ENCODE measurements at regions of chr17 and their contacts with region 1.

Region 1: DNA sequence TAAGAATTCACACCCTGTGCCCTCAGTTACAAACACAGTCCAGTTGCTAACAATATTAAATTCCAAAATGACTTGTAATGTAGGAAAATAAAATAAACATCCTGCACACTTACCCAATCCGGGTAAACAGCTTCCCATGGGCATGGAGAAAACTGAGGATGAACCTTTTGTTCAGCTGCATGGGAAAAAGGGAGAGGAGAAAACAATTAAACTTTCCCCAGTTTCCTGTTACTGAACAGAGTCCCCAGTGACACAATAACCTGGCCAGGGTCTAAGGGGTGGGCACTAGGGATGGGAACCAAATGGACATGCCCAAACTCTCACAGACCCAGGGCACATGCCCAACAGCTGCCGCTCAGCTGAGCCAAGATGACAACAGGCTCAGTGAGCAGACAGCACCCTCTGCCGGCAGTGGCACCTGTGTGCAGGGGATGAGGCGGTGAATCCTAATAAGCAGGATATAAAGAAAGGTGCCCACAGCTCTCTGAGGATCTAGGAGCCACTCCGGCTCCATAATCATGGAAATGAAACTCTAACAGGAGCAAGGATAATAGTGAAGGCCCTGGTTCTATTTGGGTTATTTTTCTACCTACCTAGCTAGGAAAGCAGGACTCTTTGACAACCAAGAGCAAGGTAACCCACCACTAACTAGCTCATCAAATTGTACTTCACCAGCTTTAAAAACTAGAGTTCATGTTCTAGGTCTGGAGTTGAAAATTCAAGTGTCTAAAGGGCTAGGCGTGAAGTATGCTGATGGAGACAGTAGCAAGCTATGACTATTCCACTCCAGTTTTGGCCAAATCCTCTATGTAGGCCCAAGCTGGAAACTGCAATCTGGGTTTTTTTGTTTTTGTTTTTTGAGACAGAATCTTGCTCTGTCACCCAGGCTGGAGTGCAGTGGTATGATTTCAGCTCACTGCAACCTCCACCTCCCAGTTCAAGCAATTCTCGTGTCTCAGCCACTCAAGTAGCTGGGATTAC is 58.8 kb downstream of the SMG6 start:
- DNase-seq: peak; percentile 89
- ATAC-seq: peak; percentile 98
- H3K4me3 Mint-ChIP-seq: no peak overlapping the region
- H3K27ac Mint-ChIP-seq: no peak overlapping the region
- H3K4me1 Mint-ChIP-seq: no peaks in the 10 kb centered on the region
- H3K27me3 Mint-ChIP-seq: no peaks in the 10 kb centered on the region
- CTCF ChIP-seq: peak; percentile 94

Region 2: DNA sequence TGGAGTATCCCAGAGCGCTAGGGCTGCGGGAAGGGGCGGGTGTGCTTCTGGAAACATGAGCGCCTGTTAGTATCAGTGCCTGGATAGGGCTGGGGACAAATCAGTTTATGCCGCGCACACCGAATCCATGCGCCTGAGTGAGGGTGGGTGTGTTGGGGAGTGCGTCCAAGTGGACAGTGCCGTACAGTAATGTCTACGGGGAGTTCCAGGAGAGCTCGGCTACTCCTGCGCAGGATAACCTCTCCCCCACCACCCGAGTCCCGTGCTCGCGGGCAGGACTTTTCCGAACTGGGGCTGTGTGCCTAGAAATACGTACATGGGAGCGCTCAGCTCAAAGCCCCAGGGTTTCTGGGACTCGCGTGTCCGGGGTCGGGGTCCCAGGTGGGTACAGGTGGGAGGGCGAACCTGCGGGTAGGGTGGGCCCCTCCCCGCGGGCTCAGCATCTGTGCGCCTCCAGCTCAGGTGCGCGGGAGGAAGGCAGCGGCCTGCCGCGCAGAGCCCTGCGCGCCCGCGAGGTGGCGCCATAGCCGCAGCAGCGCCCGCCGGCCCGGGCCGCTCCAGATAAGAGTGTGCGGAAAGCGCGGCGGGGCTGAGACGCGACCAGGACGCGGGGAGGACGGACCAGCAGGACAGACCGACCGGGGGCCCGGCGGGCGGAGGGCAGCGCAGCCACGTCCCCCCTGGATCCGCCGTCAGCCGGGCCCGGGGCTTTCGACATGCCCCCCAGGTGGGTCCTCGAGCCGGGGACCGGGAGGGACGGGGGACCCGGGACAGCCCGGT is 190.1 kb before region 1 on chr17 and contains the start of gene HIC1:
- CTCF ChIA-PET with region 1: interaction called, 229 read pairs
- POLR2A ChIA-PET with region 1: interaction called, 5 read pairs
- DNase-seq: peak; percentile 80
- ATAC-seq: peak; percentile 28
- H3K4me3 Mint-ChIP-seq: peak within 1 kb of the TSS; percentile 60
- H3K27ac Mint-ChIP-seq: no peak within 1 kb of the TSS
- H3K4me1 Mint-ChIP-seq: peaks cover 4% of the 10 kb centered on the region
- H3K27me3 Mint-ChIP-seq: peaks cover 68% of the 10 kb centered on the region
- CTCF ChIP-seq: peak; percentile 86
- total RNA-seq, gene HIC1: 0.37 to 0.46 TPM (median 0.39 TPM) in 3 replicates

Region 3: GRCh38 chr17:2075336-2076086 is 169.3 kb before region 1 on chr17:
- CTCF ChIA-PET with region 1: interaction called, 14 read pairs
- POLR2A ChIA-PET with region 1: no interaction called
- DNase-seq: peak; percentile 28
- ATAC-seq: peak; percentile 59
- H3K4me3 Mint-ChIP-seq: no peak overlapping the region
- H3K27ac Mint-ChIP-seq: peak overlapping the region; percentile 90
- H3K4me1 Mint-ChIP-seq: peaks cover 19% of the 10 kb centered on the region
- H3K27me3 Mint-ChIP-seq: no peaks in the 10 kb centered on the region
- CTCF ChIP-seq: no peak

Region 4: GRCh38 chr17:2122641-2123302 is 122.1 kb before region 1 on chr17:
- CTCF ChIA-PET with region 1: interaction called, 23 read pairs
- POLR2A ChIA-PET with region 1: no interaction called
- DNase-seq: peak; percentile 27
- ATAC-seq: peak; percentile 68
- H3K4me3 Mint-ChIP-seq: no peak overlapping the region
- H3K27ac Mint-ChIP-seq: peak overlapping the region; percentile 69
- H3K4me1 Mint-ChIP-seq: peaks cover 32% of the 10 kb centered on the region
- H3K27me3 Mint-ChIP-seq: no peaks in the 10 kb centered on the region
- CTCF ChIP-seq: no peak

Region 5: GRCh38 chr17:2190014-2190413 is 54.8 kb before region 1 on chr17:
- CTCF ChIA-PET with region 1: interaction called, 12 read pairs
- POLR2A ChIA-PET with region 1: no interaction called
- DNase-seq: no peak
- ATAC-seq: no peak
- H3K4me3 Mint-ChIP-seq: no peak overlapping the region
- H3K27ac Mint-ChIP-seq: no peak overlapping the region
- H3K4me1 Mint-ChIP-seq: peaks cover 31% of the 10 kb centered on the region
- H3K27me3 Mint-ChIP-seq: no peaks in the 10 kb centered on the region
- CTCF ChIP-seq: no peak

Region 6: GRCh38 chr17:2233441-2233947 is 11.3 kb before region 1 on chr17:
- CTCF ChIA-PET with region 1: interaction called, 26 read pairs
- POLR2A ChIA-PET with region 1: no interaction called
- DNase-seq: no peak
- ATAC-seq: no peak
- H3K4me3 Mint-ChIP-seq: no peak overlapping the region
- H3K27ac Mint-ChIP-seq: no peak overlapping the region
- H3K4me1 Mint-ChIP-seq: no peaks in the 10 kb centered on the region
- H3K27me3 Mint-ChIP-seq: no peaks in the 10 kb centered on the region
- CTCF ChIP-seq: no peak